Right cardiac atrium (tissue), 5 donors: ENCODE measurements at regions of chr16 and their contacts with region 1.

Region 1: DNA sequence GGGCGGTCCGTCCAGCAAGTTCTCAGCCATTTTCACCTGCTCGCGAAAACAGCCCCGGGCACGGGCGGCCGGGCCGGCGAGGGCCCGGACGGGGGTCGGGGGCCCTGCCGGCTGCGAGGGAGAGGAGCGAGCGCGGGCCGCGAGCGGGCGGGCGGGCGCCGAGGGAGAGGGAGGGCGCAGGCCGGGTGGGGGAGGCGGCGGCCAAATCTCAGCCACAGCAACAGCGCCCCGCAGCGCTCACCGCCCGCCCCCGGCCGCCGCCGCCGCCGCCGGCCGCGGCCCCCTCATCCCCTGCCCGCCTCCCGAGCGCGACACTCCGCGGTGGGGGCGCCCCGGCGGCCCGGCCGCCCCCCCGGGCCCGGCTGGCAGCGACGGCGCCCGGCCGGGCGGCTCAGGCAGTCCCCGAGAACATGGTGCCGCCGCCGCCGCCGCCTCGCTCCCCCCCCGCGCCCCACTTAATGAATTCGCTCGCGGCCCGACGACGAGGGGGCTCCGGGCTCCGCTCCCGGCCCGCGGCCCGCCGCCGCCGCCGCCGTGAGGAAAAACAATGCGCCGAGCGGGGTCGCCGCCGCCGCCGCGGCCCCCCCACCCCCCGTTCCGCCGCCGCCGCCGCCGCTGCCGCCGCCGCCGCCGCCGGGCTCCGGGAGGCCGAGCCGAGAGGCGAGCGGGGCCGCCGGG is 487 bp downstream of the CREBBP start:
- DNase-seq: peak; percentile 81 to 92 (median 92)
- ATAC-seq: peak; percentile 70 to 77
- H3K4me3 ChIP-seq: peak overlapping the region; percentile 94
- H3K27ac ChIP-seq: peak overlapping the region; percentile 86
- H3K4me1 ChIP-seq: peaks cover 10% of the 10 kb centered on the region
- H3K27me3 ChIP-seq: no peaks in the 10 kb centered on the region

Region 2: GRCh38 chr16:3690470-3690928 is 189.5 kb before region 1 on chr16:
- intact Hi-C with region 1: loop called in 3 of 4 experiments (anchors 5 kb)
- DNase-seq: peak; percentile 92 to 96 (median 96)
- ATAC-seq: peak; percentile 94 to 95
- H3K4me3 ChIP-seq: peak overlapping the region; percentile 7
- H3K27ac ChIP-seq: peak overlapping the region; percentile 13
- H3K4me1 ChIP-seq: peaks cover 2% of the 10 kb centered on the region
- H3K27me3 ChIP-seq: no peaks in the 10 kb centered on the region

Region 3: GRCh38 chr16:3717235-3718018 is 162.6 kb before region 1 on chr16 and contains the start of gene TRAP1:
- intact Hi-C with region 1: loop called in 1 of 4 experiments (anchors 10 kb)
- DNase-seq: peak; percentile 91 to 97 (median 97)
- ATAC-seq: peak; percentile 97
- H3K4me3 ChIP-seq: peak within 1 kb of the TSS; percentile 67
- H3K27ac ChIP-seq: peak within 1 kb of the TSS; percentile 65
- H3K4me1 ChIP-seq: no peaks in the 10 kb centered on the region
- H3K27me3 ChIP-seq: no peaks in the 10 kb centered on the region
- total RNA-seq, gene TRAP1: 88.6 to 108 (median 96.7) TPM

Region 4: GRCh38 chr16:3761375-3762106 is 118.5 kb before region 1 on chr16:
- intact Hi-C with region 1: loop called in 1 of 4 experiments (anchors 10 kb)
- DNase-seq: no peak
- ATAC-seq: peak in 1 of 2 donors; percentile 25
- H3K4me3 ChIP-seq: no peak overlapping the region
- H3K27ac ChIP-seq: no peak overlapping the region
- H3K4me1 ChIP-seq: no peaks in the 10 kb centered on the region
- H3K27me3 ChIP-seq: no peaks in the 10 kb centered on the region

Region 5: GRCh38 chr16:3774156-3774767 is 105.8 kb before region 1 on chr16:
- intact Hi-C with region 1: loop called in 2 of 4 experiments (anchors 10 kb)
- DNase-seq: peak; percentile 59 to 85 (median 76)
- ATAC-seq: peak; percentile 78 to 88
- H3K4me3 ChIP-seq: no peak overlapping the region
- H3K27ac ChIP-seq: peak overlapping the region; percentile 37
- H3K4me1 ChIP-seq: peaks cover 3% of the 10 kb centered on the region
- H3K27me3 ChIP-seq: no peaks in the 10 kb centered on the region

Region 6: GRCh38 chr16:3793161-3793576 is 86.9 kb before region 1 on chr16:
- intact Hi-C with region 1: loop called in 1 of 4 experiments (anchors 10 kb)
- DNase-seq: peak; percentile 62 to 79 (median 72)
- ATAC-seq: peak; percentile 80 to 93
- H3K4me3 ChIP-seq: no peak overlapping the region
- H3K27ac ChIP-seq: peak overlapping the region; percentile 50
- H3K4me1 ChIP-seq: peaks cover 5% of the 10 kb centered on the region
- H3K27me3 ChIP-seq: no peaks in the 10 kb centered on the region